PC-3 (cell line): ENCODE measurements at regions of chr1 and their contacts with region 1.

Region 1: GRCh38 chr1:246214708-246215509 is 292.2 kb downstream of the SMYD3 start:
- DNase-seq: peak; percentile 98
- ATAC-seq: peak; percentile 99
- H3K4me3 ChIP-seq: no peak overlapping the region
- H3K27ac ChIP-seq: peak overlapping the region; percentile 56
- H3K4me1 ChIP-seq: peaks cover 18% of the 10 kb centered on the region
- H3K27me3 ChIP-seq: no peaks in the 10 kb centered on the region
- CTCF ChIP-seq: no peak

Region 2: GRCh38 chr1:246139745-246140182 is 75.1 kb before region 1 on chr1:
- CTCF ChIA-PET with region 1: no interaction called
- POLR2A ChIA-PET with region 1: no interaction called
- intact Hi-C with region 1: loop called (anchors 1 kb)
- DNase-seq: peak; percentile 97
- ATAC-seq: peak; percentile 78
- H3K4me3 ChIP-seq: peak overlapping the region; percentile 21; the same call in 1 of the 2 replicates
- H3K27ac ChIP-seq: peak overlapping the region; percentile 96
- H3K4me1 ChIP-seq: peaks cover 52% of the 10 kb centered on the region
- H3K27me3 ChIP-seq: no peaks in the 10 kb centered on the region
- CTCF ChIP-seq: no peak

Region 3: DNA sequence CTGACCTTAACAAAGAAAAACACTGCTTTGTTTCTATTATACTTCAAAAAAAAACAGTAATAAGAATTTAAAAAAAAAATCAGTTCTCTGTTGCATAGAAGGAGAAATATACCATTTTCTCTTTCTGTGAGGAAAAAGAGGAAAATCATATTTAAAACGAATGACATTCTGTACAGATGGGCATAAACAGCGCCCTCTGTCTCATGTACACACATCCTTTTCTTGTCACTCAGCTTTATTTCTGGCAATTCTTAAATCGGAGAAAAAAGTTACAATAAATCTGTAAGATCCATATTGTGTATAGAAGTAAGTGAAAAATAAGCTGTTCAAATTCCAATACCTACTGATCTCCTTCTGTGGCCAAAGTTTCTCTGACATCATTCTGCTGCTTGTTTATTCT is 46.7 kb after region 1 on chr1:
- CTCF ChIA-PET with region 1: no interaction called
- POLR2A ChIA-PET with region 1: no interaction called
- intact Hi-C with region 1: loop called (anchors 1 kb)
- DNase-seq: peak; percentile 14
- ATAC-seq: peak; percentile 8; the same call in 1 of the 2 replicates
- H3K4me3 ChIP-seq: 0 out of 2 replicates have a peak overlapping the region, but pooled peaks have one; percentile 2
- H3K27ac ChIP-seq: peak overlapping the region; percentile 59
- H3K4me1 ChIP-seq: peaks cover 15% of the 10 kb centered on the region
- H3K27me3 ChIP-seq: no peaks in the 10 kb centered on the region
- CTCF ChIP-seq: peak; percentile 73